ENCODE measurements at regions of chr2 and their contacts with region 1.

Region 1: DNA sequence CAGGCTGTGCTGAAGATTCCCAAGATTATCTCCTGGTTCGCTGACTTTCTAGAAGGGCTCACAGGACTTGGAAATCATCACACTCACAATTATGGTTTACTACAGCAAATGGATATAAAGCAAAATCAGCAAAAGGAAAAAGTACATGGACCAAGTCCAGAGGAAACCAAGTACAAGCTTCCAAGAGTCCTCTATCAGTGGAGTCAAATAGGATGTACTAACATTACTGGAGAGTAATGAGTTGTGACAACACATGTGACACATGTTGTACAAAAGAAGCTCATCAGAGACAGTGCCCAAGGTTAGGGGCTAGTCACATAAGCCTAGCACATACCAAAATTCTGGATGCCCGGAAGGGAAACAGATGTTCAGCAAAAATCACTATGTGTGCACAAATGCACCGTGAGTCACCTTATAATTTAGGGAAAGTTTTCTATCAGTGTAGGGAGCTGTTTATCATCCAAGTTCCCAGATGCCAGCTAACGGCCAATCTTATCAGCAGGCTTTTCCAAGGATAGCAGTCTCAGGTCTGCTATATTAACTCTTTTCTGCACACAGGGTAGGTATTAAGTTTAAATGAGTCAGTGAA is 9.5 kb downstream of the TMEM237 start:
- DNase-seq: no peak
- ATAC-seq: no peak
- H3K4me3 ChIP-seq: no peak overlapping the region
- H3K27ac ChIP-seq: no peak overlapping the region
- H3K4me1 ChIP-seq: no peaks in the 10 kb centered on the region
- H3K27me3 ChIP-seq: no peaks in the 10 kb centered on the region
- CTCF ChIP-seq: no peak

Region 2: DNA sequence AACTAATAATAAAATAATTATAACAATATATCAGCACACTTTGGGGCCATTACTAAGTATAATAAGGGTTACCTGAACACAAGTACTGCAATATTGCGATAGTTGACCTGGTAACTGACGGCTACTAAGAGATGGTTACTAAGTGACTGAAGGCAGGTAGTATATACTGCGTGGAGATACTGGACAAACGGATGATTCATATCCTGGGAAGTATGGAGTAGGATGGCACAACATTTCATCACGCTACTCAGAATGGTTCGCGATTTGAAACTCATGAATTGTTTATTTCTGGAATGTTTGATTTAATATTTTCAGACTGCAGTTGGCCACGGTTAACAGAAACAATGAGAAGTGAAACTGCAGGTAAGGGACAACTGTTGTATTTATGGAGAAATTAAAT is 237.2 kb before region 1 on chr2:
- intact Hi-C with region 1: loop called in 1 of 2 experiments (anchors 10 kb)
- DNase-seq: no peak
- ATAC-seq: no peak
- H3K4me3 ChIP-seq: no peak overlapping the region
- H3K27ac ChIP-seq: no peak overlapping the region
- H3K4me1 ChIP-seq: peaks cover 5% of the 10 kb centered on the region
- H3K27me3 ChIP-seq: no peaks in the 10 kb centered on the region
- CTCF ChIP-seq: no peak

Region 3: DNA sequence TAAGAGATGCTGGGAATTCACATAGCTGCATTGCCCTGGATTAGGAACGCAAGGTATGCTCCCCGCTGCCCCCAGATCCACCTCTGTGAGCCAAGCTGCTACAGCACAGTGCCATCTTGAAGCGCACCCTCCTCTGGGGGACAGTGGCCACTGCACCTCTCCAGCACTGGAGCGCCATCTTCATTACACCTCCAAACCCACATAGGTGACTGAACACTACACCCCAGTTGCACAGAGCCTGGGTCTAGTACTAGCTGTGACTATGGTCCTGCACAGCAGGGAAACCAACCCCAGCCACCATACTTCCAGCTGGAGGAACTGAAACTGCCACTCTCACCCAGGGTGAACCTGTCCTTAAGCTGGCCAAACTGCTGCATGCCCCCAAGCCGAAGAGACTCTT is 75.1 kb before region 1 on chr2:
- intact Hi-C with region 1: no loop called
- DNase-seq: no peak
- ATAC-seq: no peak
- H3K4me3 ChIP-seq: no peak overlapping the region
- H3K27ac ChIP-seq: no peak overlapping the region
- H3K4me1 ChIP-seq: no peaks in the 10 kb centered on the region
- H3K27me3 ChIP-seq: no peaks in the 10 kb centered on the region
- CTCF ChIP-seq: no peak

Region 4: GRCh38 chr2:201707753-201708152 is 74.0 kb after region 1 on chr2:
- intact Hi-C with region 1: loop called in 1 of 2 experiments (anchors 10 kb)
- DNase-seq: no peak
- ATAC-seq: no peak
- H3K4me3 ChIP-seq: no peak overlapping the region
- H3K27ac ChIP-seq: no peak overlapping the region
- H3K4me1 ChIP-seq: no peaks in the 10 kb centered on the region
- H3K27me3 ChIP-seq: no peaks in the 10 kb centered on the region
- CTCF ChIP-seq: no peak

Region 5: GRCh38 chr2:201831469-201831868 is 197.7 kb after region 1 on chr2:
- intact Hi-C with region 1: no loop called
- DNase-seq: no peak
- ATAC-seq: no peak
- H3K4me3 ChIP-seq: no peak overlapping the region
- H3K27ac ChIP-seq: no peak overlapping the region
- H3K4me1 ChIP-seq: no peaks in the 10 kb centered on the region
- H3K27me3 ChIP-seq: no peaks in the 10 kb centered on the region
- CTCF ChIP-seq: no peak

Measured in psoas muscle (tissue), 8 donors.